Activated CD4-positive, alpha-beta T cell treated with anti-CD3 and anti-CD28 coated beads for 36 hours (primary cell): ENCODE measurements at regions of chr12 and their contacts with region 1.

Region 1: GRCh38 chr12:55817346-55818139 is at the starts of genes ORMDL2 and SARNP:
- DNase-seq: peak; percentile 97
- ATAC-seq: peak; percentile 98
- H3K4me3 Mint-ChIP-seq: no peak within 1 kb of the TSS
- H3K27ac Mint-ChIP-seq: no peak within 1 kb of the TSS
- H3K4me1 Mint-ChIP-seq: peaks cover 49% of the 10 kb centered on the region
- H3K27me3 Mint-ChIP-seq: no peaks in the 10 kb centered on the region
- total RNA-seq, gene ORMDL2: 29.4 to 35.6 TPM
- total RNA-seq, gene SARNP: 111 to 114 TPM

Region 2: DNA sequence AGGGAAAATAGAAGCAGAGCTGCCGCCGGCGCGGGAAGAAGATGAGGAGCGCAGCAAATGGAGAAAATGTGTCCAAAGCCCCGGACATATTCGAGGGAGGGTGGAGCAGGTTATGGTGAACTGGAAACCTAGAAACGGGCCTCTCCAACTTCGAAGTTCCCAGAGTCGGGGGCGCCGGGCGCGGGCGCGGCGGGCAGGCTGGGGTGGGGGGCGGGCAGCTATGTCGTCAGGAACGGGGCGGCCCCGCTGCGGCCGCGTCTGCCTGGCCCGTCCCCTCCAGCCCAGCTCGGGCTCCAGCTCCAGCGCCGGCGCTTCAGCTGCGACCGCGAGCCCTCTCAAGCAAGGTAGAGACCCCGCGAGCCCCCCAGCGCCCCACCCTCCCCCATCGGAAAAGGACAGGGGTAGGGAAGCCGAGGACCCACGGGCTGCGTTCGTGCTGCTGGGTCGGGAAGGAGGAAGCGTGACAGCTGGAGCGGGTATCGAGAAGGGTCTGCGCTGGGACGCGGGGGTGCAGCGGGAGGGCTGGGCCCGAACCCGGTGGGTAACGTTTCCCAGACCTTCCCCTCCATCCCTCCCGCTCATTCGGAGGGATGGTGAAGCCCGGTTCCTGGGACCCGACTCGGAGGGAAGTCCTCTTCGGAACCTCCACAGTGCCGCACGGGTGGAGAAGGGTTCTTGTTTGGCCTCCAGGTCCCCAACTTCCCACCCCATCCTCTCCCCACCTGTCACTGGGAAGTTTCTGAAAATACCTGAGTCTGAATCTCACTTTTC is 114.4 kb after region 1 on chr12:
- CTCF ChIA-PET with region 1: interaction called, 10 read pairs
- POLR2A ChIA-PET with region 1: interaction called, 7 read pairs
- intact Hi-C with region 1: loop called (anchors 1 kb)
- DNase-seq: peak; percentile 54
- ATAC-seq: no peak
- H3K4me3 Mint-ChIP-seq: peak overlapping the region; percentile 100
- H3K27ac Mint-ChIP-seq: peak overlapping the region; percentile 99
- H3K4me1 Mint-ChIP-seq: peaks cover 59% of the 10 kb centered on the region
- H3K27me3 Mint-ChIP-seq: no peaks in the 10 kb centered on the region

Region 3: DNA sequence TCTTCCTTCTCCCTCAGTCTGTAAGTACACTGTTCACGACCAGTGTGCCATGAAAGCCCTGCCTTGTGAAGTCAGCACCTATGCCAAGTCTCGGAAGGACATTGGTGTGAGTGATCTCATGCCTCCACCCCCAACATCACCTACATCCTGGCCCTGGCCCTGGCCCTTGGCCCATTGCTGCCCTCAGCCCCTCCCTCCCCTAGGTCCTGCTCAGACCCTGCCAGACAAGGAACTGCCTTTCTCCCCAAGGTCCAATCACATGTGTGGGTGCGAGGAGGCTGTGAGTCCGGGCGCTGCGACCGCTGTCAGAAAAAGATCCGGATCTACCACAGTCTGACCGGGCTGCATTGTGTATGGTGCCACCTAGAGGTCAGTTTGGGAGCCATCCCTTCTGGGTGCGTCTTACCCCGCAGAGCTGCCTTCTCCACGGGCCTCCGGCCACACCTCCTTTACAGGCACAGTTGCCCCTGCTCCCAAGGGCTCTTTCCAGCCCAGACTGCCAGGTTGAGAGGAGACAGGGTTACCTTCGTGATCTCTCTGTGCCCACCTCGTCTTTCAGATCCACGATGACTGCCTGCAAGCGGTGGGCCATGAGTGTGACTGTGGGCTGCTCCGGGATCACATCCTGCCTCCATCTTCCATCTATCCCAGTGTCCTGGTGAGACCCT is 122.7 kb after region 1 on chr12:
- CTCF ChIA-PET with region 1: interaction called, 17 read pairs
- POLR2A ChIA-PET with region 1: interaction called, 4 read pairs
- intact Hi-C with region 1: no loop called
- DNase-seq: peak; percentile 90
- ATAC-seq: peak; percentile 77
- H3K4me3 Mint-ChIP-seq: peak overlapping the region; percentile 1
- H3K27ac Mint-ChIP-seq: peak overlapping the region; percentile 58
- H3K4me1 Mint-ChIP-seq: peaks cover 75% of the 10 kb centered on the region
- H3K27me3 Mint-ChIP-seq: no peaks in the 10 kb centered on the region

Region 4: GRCh38 chr12:55966408-55967281 is 149.1 kb after region 1 on chr12 and contains the start of gene CDK2:
- CTCF ChIA-PET with region 1: no interaction called
- POLR2A ChIA-PET with region 1: interaction called, 4 read pairs
- intact Hi-C with region 1: loop called in 1 of 2 experiments (anchors 2 kb)
- DNase-seq: peak; percentile 94
- ATAC-seq: peak; percentile 98
- H3K4me3 Mint-ChIP-seq: peak within 1 kb of the TSS; percentile 99
- H3K27ac Mint-ChIP-seq: peak within 1 kb of the TSS; percentile 94
- H3K4me1 Mint-ChIP-seq: peaks cover 30% of the 10 kb centered on the region
- H3K27me3 Mint-ChIP-seq: no peaks in the 10 kb centered on the region
- total RNA-seq, gene CDK2: 104 to 149 TPM